Dorsolateral prefrontal cortex (tissue), 120 donors: ENCODE measurements at regions of chr21 and their contacts with region 1.

Region 1: GRCh38 chr21:32834916-32835235 is 63.3 kb upstream of the PAXBP1 start:
- DNase-seq: peak in 2 of 10 donors; percentile 19 to 43
- H3K4me3 ChIP-seq: peak overlapping the region in 16 of 59 donors; percentile 1 to 42 (median 14)
- H3K27ac ChIP-seq: peak overlapping the region in 56 of 59 donors; percentile 1 to 82 (median 66)
- H3K27me3 ChIP-seq: no peaks in the 10 kb centered on the region
- CTCF ChIP-seq: no peak

Region 2: GRCh38 chr21:32569261-32570230 is 265.3 kb before region 1 on chr21:
- intact Hi-C with region 1: no loop called
- DNase-seq: peak in 9 of 10 donors; percentile 47 to 76 (median 68)
- H3K4me3 ChIP-seq: peak overlapping the region; percentile 49 to 88 (median 64)
- H3K27ac ChIP-seq: peak overlapping the region in 40 of 59 donors; percentile 20 to 86 (median 57)
- H3K27me3 ChIP-seq: no peaks in the 10 kb centered on the region
- CTCF ChIP-seq: peak; percentile 58 to 91 (median 80)

Region 3: DNA sequence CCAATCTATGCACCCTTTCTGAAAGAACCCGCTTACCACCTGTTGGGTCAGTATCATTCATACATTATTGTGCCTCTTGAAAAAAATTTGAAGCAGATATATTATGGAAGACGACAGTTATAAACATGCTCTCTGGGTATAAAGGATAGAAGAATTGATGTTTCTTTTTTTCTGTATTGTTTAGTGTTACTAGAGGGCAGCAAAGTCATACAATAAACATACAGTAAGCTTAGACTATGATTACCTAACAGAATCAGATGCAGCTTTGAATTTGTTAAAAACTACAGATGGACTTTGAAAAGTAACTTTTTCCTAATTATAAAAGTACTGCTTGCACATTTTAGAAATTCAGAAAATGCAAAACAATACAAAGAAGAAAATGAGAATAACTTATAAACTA is 52.2 kb before region 1 on chr21:
- intact Hi-C with region 1: no loop called
- DNase-seq: no peak
- H3K4me3 ChIP-seq: no peak overlapping the region
- H3K27ac ChIP-seq: peak overlapping the region in 12 of 59 donors; percentile 0 to 65 (median 32)
- H3K27me3 ChIP-seq: no peaks in the 10 kb centered on the region
- CTCF ChIP-seq: peak in 32 of 56 donors; percentile 6 to 62 (median 35)

Region 4: DNA sequence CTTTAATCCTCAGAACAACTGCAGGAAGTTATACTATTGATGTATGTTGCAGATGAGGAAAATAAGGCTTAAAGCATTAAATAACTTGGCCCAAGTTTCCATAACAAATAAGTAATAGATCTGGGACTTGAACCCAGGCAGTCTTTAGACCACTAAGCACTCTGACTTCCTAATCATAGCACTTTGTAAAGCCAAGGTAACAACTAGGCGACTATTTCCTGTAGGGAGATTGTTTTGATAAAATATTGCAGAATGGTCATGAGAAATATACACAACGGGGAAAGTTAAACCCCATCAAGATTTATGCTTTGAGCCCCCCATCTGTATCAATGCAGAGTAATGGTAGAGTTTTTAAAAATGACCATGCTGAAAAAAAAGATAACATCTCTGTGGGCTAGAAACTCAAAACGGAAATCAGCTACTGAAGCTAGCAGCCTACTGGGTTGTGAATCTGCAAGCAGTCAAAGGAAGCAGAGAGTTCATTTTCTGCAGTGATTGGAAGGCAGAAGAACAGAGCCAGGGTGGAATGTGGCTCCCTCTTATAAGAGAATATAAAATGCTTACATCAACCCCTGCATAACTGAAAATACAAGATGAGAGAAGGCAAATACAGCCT is 79.7 kb after region 1 on chr21:
- intact Hi-C with region 1: no loop called
- DNase-seq: no peak
- H3K4me3 ChIP-seq: no peak overlapping the region
- H3K27ac ChIP-seq: no peak overlapping the region
- H3K27me3 ChIP-seq: no peaks in the 10 kb centered on the region
- CTCF ChIP-seq: no peak

Region 5: DNA sequence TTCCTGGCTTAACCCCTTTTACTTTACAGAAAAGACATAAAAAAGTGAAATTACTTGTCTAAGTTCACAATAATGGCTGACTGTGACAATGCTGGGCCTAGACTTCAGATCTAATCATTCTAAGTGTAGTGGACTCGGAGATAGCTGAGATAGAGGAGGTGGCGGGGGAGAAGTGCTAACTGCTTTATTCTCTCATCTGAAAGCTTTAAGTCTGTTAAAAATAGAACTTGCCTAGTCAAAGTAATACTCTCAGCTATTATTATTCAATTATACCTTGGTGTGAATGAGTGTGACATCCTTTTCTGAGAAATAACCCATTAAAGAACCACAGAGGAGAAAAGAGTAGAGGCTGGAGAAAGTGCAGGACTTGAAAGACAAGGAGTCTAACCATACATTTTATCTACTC is 94.8 kb after region 1 on chr21:
- intact Hi-C with region 1: loop called in 1 of 2 experiments (anchors 10 kb)
- DNase-seq: no peak
- H3K4me3 ChIP-seq: no peak overlapping the region
- H3K27ac ChIP-seq: no peak overlapping the region
- H3K27me3 ChIP-seq: no peaks in the 10 kb centered on the region
- CTCF ChIP-seq: no peak

Region 6: DNA sequence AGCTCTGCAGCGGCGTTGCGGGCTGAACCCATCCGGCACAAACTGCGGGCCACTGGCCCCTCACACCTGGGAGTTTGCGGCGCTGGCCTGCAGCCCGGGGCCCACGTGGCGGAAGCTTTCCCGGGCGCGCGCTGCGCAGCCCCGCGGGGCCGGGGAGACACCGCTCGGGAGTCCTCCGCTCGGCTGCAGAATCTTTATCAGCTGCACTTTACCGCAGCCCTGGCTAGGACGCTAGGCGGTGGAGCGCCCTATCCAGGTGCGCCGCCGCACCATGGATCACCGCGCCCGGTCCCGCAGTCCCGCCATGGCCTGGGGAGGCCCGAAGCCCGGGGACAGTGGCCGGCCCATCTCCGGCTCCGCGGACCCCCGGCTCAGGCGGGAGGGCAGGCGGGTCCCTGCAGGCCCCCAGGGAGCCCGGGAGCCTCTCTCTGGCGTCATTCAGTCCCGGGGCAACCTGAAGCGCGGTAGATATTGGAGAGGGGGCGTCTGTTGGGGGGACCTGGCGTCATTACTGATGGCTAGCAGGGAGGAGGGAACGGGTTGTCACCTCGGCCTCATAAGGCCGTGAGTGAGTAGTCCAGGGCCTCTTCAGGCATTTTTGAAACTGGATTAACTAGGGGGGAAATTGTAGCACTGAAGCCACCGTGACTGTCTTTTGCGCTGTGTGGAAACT is 185.1 kb after region 1 on chr21:
- intact Hi-C with region 1: loop called (anchors 5 to 10 kb)
- DNase-seq: no peak
- H3K4me3 ChIP-seq: peak overlapping the region in 58 of 59 donors; percentile 6 to 66 (median 44)
- H3K27ac ChIP-seq: peak overlapping the region in 5 of 59 donors; percentile 4 to 71 (median 25)
- H3K27me3 ChIP-seq: peaks cover 0 to 88% (median 59%) of the 10 kb centered on the region in 45 donors
- CTCF ChIP-seq: peak in 1 of 56 donors; percentile 6

Region 7: DNA sequence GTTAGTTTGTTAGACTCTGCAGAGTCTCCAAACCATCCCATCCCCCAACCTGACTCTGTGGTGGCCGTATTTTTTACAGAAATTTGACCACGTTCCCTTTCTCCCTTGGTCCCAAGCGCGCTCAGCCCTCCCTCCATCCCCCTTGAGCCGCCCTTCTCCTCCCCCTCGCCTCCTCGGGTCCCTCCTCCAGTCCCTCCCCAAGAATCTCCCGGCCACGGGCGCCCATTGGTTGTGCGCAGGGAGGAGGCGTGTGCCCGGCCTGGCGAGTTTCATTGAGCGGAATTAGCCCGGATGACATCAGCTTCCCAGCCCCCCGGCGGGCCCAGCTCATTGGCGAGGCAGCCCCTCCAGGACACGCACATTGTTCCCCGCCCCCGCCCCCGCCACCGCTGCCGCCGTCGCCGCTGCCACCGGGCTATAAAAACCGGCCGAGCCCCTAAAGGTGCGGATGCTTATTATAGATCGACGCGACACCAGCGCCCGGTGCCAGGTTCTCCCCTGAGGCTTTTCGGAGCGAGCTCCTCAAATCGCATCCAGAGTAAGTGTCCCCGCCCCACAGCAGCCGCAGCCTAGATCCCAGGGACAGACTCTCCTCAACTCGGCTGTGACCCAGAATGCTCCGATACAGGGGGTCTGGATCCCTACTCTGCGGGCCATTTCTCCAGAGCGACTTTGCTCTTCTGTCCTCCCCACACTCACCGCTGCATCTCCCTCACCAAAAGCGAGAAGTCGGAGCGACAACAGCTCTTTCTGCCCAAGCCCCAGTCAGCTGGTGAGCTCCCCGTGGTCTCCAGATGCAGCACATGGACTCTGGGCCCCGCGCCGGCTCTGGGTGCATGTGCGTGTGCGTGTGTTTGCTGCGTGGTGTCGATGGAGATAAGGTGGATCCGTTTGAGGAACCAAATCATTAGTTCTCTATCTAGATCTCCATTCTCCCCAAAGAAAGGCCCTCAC is 190.9 kb after region 1 on chr21 and contains the start of gene OLIG2:
- intact Hi-C with region 1: loop called (anchors 5 to 10 kb)
- DNase-seq: peak; percentile 46 to 96 (median 95)
- H3K4me3 ChIP-seq: peak within 1 kb of the TSS; percentile 35 to 82 (median 61)
- H3K27ac ChIP-seq: peak within 1 kb of the TSS; percentile 40 to 93 (median 86)
- H3K27me3 ChIP-seq: peaks cover 0 to 100% (median 92%) of the 10 kb centered on the region in 45 donors
- CTCF ChIP-seq: peak in 1 of 56 donors; percentile 17
- total RNA-seq, gene OLIG2: 13.9 to 165 (median 45.4) TPM

Region 8: GRCh38 chr21:33374450-33375096 is 539.7 kb after region 1 on chr21:
- intact Hi-C with region 1: loop called in 1 of 2 experiments (anchors 10 kb)
- DNase-seq: peak in 2 of 10 donors; percentile 30 to 48
- H3K4me3 ChIP-seq: no peak overlapping the region
- H3K27ac ChIP-seq: peak overlapping the region in 24 of 59 donors; percentile 2 to 82 (median 36)
- H3K27me3 ChIP-seq: no peaks in the 10 kb centered on the region
- CTCF ChIP-seq: peak; percentile 19 to 74 (median 56)

Region 9: DNA sequence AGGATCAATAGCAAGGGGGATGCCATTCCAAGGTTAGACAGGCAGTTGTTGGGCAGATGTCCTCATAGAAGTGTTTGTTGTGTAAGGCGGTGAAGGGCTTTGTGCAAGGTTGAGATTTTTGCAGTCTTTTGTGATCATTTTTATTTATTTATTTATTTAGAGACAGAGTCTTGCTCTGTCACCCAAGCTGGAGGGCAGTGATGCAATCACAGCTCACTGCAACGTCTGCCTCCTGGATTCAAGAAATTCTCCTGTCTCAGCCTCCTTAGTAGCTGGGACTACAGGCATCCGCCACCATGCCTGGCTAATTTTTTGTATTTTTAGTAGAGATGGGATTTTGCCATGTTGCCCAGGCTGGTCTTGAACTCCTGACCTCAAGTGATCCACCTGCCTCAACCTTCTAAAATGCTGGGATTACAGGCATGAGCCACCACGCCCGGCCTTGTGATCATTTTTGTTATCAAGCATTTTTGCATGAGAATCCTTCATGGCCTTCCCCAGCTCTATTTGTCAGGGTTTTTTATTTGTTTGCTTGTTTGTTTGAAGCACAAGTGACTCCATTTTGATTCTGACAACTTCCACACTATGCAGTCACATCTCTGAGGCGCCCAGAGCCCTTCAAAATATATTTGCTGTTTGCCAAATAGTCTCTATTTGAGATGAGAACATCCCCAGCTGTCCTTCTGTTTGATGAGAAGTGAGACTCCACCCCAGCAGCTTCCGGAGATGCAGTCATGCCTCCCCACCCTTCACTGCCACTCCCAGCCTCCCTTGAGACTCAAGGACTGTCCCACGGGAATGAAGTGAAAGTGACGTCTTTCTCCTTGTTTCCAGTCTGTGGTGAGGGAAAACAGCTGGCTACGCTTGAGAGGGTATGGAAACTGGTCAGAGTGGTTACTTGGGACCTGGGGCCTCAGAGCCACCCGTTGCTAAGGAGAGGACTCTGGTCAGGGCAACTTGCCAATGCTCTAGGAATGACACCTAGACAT is 606.9 kb after region 1 on chr21:
- intact Hi-C with region 1: loop called in 1 of 2 experiments (anchors 5 kb)
- DNase-seq: no peak
- H3K4me3 ChIP-seq: no peak overlapping the region
- H3K27ac ChIP-seq: peak overlapping the region in 22 of 59 donors; percentile 2 to 61 (median 28)
- H3K27me3 ChIP-seq: no peaks in the 10 kb centered on the region
- CTCF ChIP-seq: no peak